ENCODE measurements at regions of chr1 and their contacts with region 1.

Region 1: DNA sequence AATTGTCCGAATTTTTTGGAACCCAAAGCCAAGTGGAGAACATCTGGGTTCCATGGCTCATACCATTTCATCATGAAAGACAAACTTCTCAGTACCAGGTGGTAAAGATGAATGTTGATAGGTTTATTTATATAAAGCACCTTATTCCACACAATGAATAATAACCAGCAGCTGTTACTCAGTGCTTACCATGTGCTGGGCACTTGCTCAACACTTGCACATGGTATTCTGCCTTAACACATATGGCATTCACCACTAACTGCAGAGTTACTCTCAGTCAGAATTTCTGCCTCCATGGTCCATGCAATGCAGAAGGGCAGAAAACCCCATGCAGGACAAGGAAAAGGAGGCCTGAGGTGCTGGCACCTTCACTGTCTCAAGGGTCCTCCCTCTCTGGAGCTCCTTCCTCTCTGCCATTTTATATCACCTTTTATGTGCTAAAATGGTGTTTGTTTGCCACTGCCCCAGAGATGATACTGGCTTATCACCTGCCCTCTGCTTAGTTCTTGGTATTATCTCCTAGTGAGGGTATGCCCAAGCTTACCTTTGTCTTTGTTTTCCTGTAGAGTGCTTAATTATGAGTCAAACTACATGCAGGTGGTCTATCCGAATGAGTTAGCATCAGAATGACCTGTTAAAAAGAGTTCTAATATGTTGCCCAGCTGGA is 76.7 kb upstream of the ZNF326 start:
- DNase-seq: no peak
- ATAC-seq: peak; percentile 92 to 97 (median 96)
- H3K4me3 ChIP-seq: no peak overlapping the region
- H3K27ac ChIP-seq: peak overlapping the region; percentile 66
- H3K4me1 ChIP-seq: peaks cover 25% of the 10 kb centered on the region
- H3K27me3 ChIP-seq: no peaks in the 10 kb centered on the region
- CTCF ChIP-seq: no peak

Region 2: GRCh38 chr1:89863165-89863830 is 55.0 kb before region 1 on chr1:
- intact Hi-C with region 1: loop called in 1 of 2 experiments (anchors 5 kb)
- DNase-seq: no peak
- ATAC-seq: no peak
- H3K4me3 ChIP-seq: no peak overlapping the region
- H3K27ac ChIP-seq: no peak overlapping the region
- H3K4me1 ChIP-seq: peaks cover 11% of the 10 kb centered on the region
- H3K27me3 ChIP-seq: no peaks in the 10 kb centered on the region
- CTCF ChIP-seq: no peak

Region 3: GRCh38 chr1:90083995-90084394 is 165.7 kb after region 1 on chr1:
- intact Hi-C with region 1: no loop called
- DNase-seq: no peak
- ATAC-seq: no peak
- H3K4me3 ChIP-seq: no peak overlapping the region
- H3K27ac ChIP-seq: no peak overlapping the region
- H3K4me1 ChIP-seq: no peaks in the 10 kb centered on the region
- H3K27me3 ChIP-seq: no peaks in the 10 kb centered on the region
- CTCF ChIP-seq: no peak

Region 4: GRCh38 chr1:90100566-90100965 is 182.3 kb after region 1 on chr1:
- intact Hi-C with region 1: no loop called
- DNase-seq: no peak
- ATAC-seq: no peak
- H3K4me3 ChIP-seq: no peak overlapping the region
- H3K27ac ChIP-seq: no peak overlapping the region
- H3K4me1 ChIP-seq: no peaks in the 10 kb centered on the region
- H3K27me3 ChIP-seq: no peaks in the 10 kb centered on the region
- CTCF ChIP-seq: no peak

Region 5: DNA sequence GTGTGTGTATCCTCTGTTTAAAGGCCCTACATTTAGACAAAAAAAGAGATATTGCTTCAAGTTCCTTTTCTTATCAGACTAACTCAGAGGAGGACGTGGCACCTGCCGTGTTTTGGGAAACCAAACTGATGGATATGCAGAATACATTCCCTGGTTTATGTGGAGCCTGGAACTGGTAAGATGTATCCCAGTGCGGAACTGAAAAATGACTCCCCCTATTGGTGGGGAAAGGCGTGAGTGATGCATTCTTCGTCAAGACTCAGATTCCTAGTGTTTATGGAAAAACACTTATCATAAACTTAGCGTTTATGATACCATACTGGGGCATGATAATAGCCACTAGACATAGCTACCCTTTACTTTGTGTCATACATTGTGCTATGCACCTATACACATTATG is 230.8 kb after region 1 on chr1:
- intact Hi-C with region 1: no loop called
- DNase-seq: no peak
- ATAC-seq: no peak
- H3K4me3 ChIP-seq: no peak overlapping the region
- H3K27ac ChIP-seq: no peak overlapping the region
- H3K4me1 ChIP-seq: no peaks in the 10 kb centered on the region
- H3K27me3 ChIP-seq: no peaks in the 10 kb centered on the region
- CTCF ChIP-seq: no peak

Measured in psoas muscle (tissue), 8 donors.